ENCODE measurements at regions of chr22 and their contacts with region 1.

Region 1: DNA sequence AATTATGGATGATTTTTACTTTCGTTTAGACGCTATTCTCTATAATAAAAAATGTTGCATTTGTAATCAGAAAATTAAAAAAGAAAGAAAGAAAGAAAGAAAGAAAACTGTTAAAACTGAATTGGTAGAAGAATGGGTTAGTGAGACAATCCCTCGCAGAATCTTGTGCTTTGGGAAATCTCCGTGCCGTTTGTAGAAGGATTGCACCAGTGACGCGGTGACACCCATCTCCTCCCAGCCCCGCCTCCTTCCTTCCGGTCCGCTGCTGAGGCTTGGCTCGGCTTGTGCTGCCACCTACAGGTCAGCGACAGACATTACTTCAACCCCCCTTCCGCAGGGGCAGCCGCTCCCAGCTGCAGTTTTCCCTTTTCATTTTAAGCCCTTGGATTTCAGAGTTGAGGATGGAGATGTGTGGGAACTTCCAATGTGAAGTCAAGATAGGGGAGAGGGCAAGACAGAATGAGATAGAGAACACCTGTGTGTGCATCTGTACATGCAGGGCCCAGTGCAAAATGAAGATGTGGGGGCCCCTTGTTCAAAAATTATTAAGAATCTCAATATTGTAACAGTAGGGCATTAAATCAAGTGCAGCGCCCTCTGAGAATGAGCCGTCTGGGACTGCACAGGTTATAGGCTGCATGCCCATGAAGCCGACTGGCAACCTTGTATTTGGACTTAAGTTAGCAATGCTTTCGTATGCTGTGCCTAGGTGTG is 41.1 kb downstream of the TST start:
- DNase-seq: peak; percentile 90 to 94
- ATAC-seq: peak; percentile 96 to 99 (median 98)
- H3K4me3 ChIP-seq: peak overlapping the region; percentile 64
- H3K27ac ChIP-seq: no peak overlapping the region
- H3K4me1 ChIP-seq: peaks cover 4% of the 10 kb centered on the region
- H3K27me3 ChIP-seq: peaks cover 0 to 19% (median 8%) of the 10 kb centered on the region in 3 donors
- CTCF ChIP-seq: peak; percentile 96

Region 2: DNA sequence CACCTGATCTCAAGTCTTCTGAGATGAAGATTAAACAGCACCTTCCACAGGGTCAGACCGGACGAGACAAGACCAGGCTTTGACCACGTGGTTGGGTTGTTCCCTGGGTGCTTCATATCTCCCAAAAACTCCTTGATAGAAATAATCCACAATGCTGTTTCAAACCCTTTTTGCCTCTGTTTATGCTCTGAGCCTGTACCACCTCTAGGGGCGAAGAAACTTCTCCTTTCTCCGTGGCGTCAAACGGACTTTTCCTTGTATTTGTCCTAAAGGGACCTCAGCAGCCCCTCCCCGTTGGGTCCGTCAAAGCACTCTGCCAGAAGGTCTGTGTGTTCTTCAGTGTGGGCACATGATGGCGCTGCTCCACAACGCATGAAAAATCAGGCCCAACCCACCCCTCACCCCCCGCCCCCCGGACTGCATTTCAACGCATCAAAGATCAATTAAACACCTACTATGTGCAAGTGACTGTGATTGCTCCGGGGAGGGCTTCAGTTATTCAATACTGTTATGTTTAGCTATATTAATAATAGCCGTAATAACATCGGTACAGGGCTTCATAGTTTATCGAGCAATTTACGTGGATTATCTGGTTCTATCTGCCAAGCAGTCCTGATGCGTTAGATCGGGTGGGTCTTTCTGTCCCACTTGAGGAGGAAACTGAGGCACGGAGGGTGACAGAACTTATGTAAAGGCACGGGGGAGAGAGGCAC is 431.9 kb before region 1 on chr22:
- intact Hi-C with region 1: loop called in 1 of 2 experiments (anchors 2 kb)
- DNase-seq: peak; percentile 32 to 59
- ATAC-seq: peak in 3 of 4 donors; percentile 72 to 78 (median 72)
- H3K4me3 ChIP-seq: no peak overlapping the region
- H3K27ac ChIP-seq: no peak overlapping the region
- H3K4me1 ChIP-seq: no peaks in the 10 kb centered on the region
- H3K27me3 ChIP-seq: peaks cover 0 to 41% (median 6%) of the 10 kb centered on the region in 3 donors
- CTCF ChIP-seq: peak; percentile 47

Region 3: GRCh38 chr22:36757668-36758211 is 220.4 kb before region 1 on chr22:
- intact Hi-C with region 1: loop called (anchors 5 kb)
- DNase-seq: peak; percentile 75 to 90
- ATAC-seq: peak; percentile 81 to 92 (median 86)
- H3K4me3 ChIP-seq: no peak overlapping the region
- H3K27ac ChIP-seq: no peak overlapping the region
- H3K4me1 ChIP-seq: no peaks in the 10 kb centered on the region
- H3K27me3 ChIP-seq: peaks cover 0 to 9% (median 8%) of the 10 kb centered on the region in 3 donors
- CTCF ChIP-seq: peak; percentile 78

Region 4: GRCh38 chr22:36781656-36782627 is 196.2 kb before region 1 on chr22:
- intact Hi-C with region 1: loop called (anchors 1 to 5 kb)
- DNase-seq: peak; percentile 74 to 87
- ATAC-seq: peak; percentile 88 to 96 (median 92)
- H3K4me3 ChIP-seq: no peak overlapping the region
- H3K27ac ChIP-seq: no peak overlapping the region
- H3K4me1 ChIP-seq: no peaks in the 10 kb centered on the region
- H3K27me3 ChIP-seq: peaks cover 0 to 26% (median 5%) of the 10 kb centered on the region in 3 donors
- CTCF ChIP-seq: peak; percentile 93

Region 5: DNA sequence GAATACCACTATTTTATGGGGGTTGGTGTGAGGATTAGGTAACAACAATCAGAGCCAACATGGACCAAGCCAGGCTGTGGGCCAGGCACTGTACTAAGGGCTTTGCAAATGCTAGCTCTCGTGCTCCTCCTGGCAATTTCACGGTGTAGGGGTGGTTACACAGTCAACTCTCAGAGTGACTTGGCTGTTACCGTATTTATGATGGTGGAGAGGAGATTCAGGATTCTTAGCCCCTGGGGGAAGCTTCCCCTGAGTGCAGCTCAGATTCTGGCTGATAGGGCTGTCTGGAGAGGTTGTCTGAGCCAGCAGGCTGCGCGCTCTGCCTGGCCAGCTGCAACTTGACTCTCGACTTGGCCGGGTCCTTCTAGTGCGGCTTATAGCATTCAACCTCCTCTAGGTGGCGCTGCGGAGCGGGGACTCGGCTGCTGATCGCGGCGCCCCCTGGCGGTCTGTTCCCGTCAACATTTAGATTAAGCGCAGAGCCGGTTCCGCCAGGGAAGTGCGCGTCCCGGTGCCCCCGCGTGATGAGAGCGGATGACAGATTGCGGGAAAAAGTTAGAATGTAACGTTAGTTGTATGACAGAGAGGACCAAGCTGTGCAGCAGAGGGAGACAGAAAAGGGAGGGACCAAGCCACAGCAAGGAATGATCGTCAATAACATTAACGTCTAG is 121.8 kb before region 1 on chr22:
- intact Hi-C with region 1: loop called (anchors 5 to 10 kb)
- DNase-seq: peak; percentile 91 to 94
- ATAC-seq: peak; percentile 92 to 97 (median 96)
- H3K4me3 ChIP-seq: no peak overlapping the region
- H3K27ac ChIP-seq: no peak overlapping the region
- H3K4me1 ChIP-seq: peaks cover 31% of the 10 kb centered on the region
- H3K27me3 ChIP-seq: peaks cover 0 to 2% (median under 1%) of the 10 kb centered on the region in 3 donors
- CTCF ChIP-seq: peak; percentile 100

Region 6: GRCh38 chr22:37210041-37210803 is 232.1 kb after region 1 on chr22:
- intact Hi-C with region 1: no loop called
- DNase-seq: peak in 1 of 2 donors; percentile 50
- ATAC-seq: no peak
- H3K4me3 ChIP-seq: no peak overlapping the region
- H3K27ac ChIP-seq: no peak overlapping the region
- H3K4me1 ChIP-seq: no peaks in the 10 kb centered on the region
- H3K27me3 ChIP-seq: peaks cover 0 to 26% (median 6%) of the 10 kb centered on the region in 3 donors
- CTCF ChIP-seq: no peak

Measured in psoas muscle (tissue), 8 donors.